ENCODE measurements at regions of chr22 and their contacts with region 1.

Region 1: GRCh38 chr22:29040385-29041275 is 21.0 kb downstream of the C22orf31 start:
- DNase-seq: peak; percentile 77
- ATAC-seq: peak; percentile 54
- H3K4me3 ChIP-seq: no peak overlapping the region
- H3K4me3 Mint-ChIP-seq: no peak overlapping the region
- H3K27ac ChIP-seq: no peak overlapping the region
- H3K27ac Mint-ChIP-seq: no peak overlapping the region
- H3K4me1 ChIP-seq: peaks cover 0 to 2% of the 10 kb centered on the region in 2 donors
- H3K4me1 Mint-ChIP-seq: no peaks in the 10 kb centered on the region
- H3K27me3 ChIP-seq: peaks cover 0 to 8% (median 3%) of the 10 kb centered on the region in 4 experiments
- H3K27me3 Mint-ChIP-seq: peaks cover 6% of the 10 kb centered on the region
- CTCF ChIP-seq: peak; percentile 96

Region 2: GRCh38 chr22:28019881-28020871 is 1020.5 kb before region 1 on chr22:
- CTCF ChIA-PET with region 1: interaction called, 15 read pairs
- POLR2A ChIA-PET with region 1: no interaction called
- intact Hi-C with region 1: no loop called
- DNase-seq: peak; percentile 67
- ATAC-seq: peak; percentile 80
- H3K4me3 ChIP-seq: no peak overlapping the region
- H3K4me3 Mint-ChIP-seq: no peak overlapping the region
- H3K27ac ChIP-seq: no peak overlapping the region
- H3K27ac Mint-ChIP-seq: no peak overlapping the region
- H3K4me1 ChIP-seq: no peaks in the 10 kb centered on the region
- H3K4me1 Mint-ChIP-seq: peaks cover 2% of the 10 kb centered on the region
- H3K27me3 ChIP-seq: no peaks in the 10 kb centered on the region
- H3K27me3 Mint-ChIP-seq: no peaks in the 10 kb centered on the region
- CTCF ChIP-seq: peak; percentile 91

Region 3: DNA sequence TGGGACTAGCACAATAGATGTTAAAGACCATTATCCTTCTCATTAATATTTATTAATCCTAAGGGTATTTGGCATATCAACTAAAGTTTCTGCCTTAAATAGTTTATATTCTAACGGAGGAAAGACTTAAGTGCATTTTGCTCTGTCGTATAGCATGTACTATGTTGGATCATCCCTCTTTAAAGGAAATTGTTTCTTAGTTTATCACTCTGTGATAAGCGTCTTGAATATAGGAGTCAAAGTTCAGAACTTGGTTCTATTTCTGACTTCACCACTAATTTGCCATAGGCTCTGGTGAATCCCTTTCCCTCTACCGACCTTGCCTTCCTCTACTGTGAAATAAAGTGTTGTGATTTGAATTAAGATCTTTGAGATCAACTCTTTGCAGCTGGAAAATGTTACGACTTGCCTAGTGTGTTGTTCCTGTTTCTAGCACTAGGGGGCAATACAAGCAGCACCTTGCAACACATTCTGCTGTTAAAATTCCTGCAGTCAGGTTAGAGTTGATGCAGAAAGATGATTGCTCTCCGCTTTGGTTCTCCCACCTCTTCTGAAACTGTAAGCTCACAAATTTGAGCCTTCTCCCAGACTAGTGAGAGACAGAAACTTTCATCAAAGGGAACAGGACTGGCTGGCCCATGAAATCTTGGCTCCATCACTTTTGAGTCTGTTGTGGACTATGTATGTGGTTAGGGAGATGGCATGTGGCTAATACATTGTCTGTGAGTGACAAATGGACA is 185.1 kb before region 1 on chr22:
- CTCF ChIA-PET with region 1: interaction called, 88 read pairs
- POLR2A ChIA-PET with region 1: no interaction called
- intact Hi-C with region 1: loop called (anchors 1 kb)
- DNase-seq: peak; percentile 72
- ATAC-seq: peak; percentile 61
- H3K4me3 ChIP-seq: no peak overlapping the region
- H3K4me3 Mint-ChIP-seq: no peak overlapping the region
- H3K27ac ChIP-seq: no peak overlapping the region
- H3K27ac Mint-ChIP-seq: no peak overlapping the region
- H3K4me1 ChIP-seq: no peaks in the 10 kb centered on the region
- H3K4me1 Mint-ChIP-seq: no peaks in the 10 kb centered on the region
- H3K27me3 ChIP-seq: peaks cover 0 to 5% (median 2%) of the 10 kb centered on the region in 4 experiments
- H3K27me3 Mint-ChIP-seq: peaks cover 12% of the 10 kb centered on the region
- CTCF ChIP-seq: peak; percentile 96

Region 4: DNA sequence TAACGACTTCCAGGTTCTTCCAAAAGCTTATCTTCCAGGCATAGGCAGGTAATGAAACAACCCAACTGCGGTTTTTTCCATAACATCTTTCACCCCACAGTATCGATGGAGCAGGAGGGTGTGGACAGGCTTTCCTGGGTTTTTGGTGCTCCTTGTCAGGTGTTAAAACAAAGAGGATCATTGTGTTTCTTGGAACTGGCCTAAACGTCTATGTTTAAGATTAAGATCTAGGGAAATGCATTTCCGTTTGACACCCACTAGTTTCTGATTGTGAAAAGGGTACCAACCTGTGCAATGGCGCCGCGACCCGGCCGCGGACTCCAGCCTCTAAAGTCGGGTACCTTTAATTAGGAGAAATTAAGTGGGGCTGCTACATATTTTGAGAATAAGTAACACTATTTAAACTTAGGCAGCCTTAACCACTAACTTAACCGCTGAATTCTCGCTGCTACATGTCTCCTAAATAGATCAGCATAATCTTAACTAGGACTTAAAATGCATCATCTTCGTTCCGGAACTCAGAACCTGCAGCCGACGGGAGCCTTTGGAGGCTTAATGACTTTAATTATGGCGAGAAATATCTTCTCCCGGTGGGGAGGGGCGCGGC is 10.5 kb before region 1 on chr22:
- CTCF ChIA-PET with region 1: interaction called, 19 read pairs
- POLR2A ChIA-PET with region 1: no interaction called
- intact Hi-C with region 1: no loop called
- DNase-seq: no peak
- ATAC-seq: no peak
- H3K4me3 ChIP-seq: peak overlapping the region in 3 of 5 experiments; percentile 13 to 52 (median 23)
- H3K4me3 Mint-ChIP-seq: peak overlapping the region; percentile 62
- H3K27ac ChIP-seq: no peak overlapping the region
- H3K27ac Mint-ChIP-seq: no peak overlapping the region
- H3K4me1 ChIP-seq: peaks cover 8 to 17% of the 10 kb centered on the region in 2 donors
- H3K4me1 Mint-ChIP-seq: peaks cover 8% of the 10 kb centered on the region
- H3K27me3 ChIP-seq: peaks cover 0 to 47% (median 24%) of the 10 kb centered on the region in 4 experiments
- H3K27me3 Mint-ChIP-seq: peaks cover 52% of the 10 kb centered on the region
- CTCF ChIP-seq: no peak

Region 5: GRCh38 chr22:29055192-29055830 is 14.7 kb after region 1 on chr22:
- CTCF ChIA-PET with region 1: interaction called, 10 read pairs
- POLR2A ChIA-PET with region 1: no interaction called
- intact Hi-C with region 1: no loop called
- DNase-seq: no peak
- ATAC-seq: no peak
- H3K4me3 ChIP-seq: no peak overlapping the region
- H3K4me3 Mint-ChIP-seq: no peak overlapping the region
- H3K27ac ChIP-seq: no peak overlapping the region
- H3K27ac Mint-ChIP-seq: no peak overlapping the region
- H3K4me1 ChIP-seq: no peaks in the 10 kb centered on the region
- H3K4me1 Mint-ChIP-seq: no peaks in the 10 kb centered on the region
- H3K27me3 ChIP-seq: peaks cover 0 to 9% (median 3%) of the 10 kb centered on the region in 4 experiments
- H3K27me3 Mint-ChIP-seq: peaks cover 27% of the 10 kb centered on the region
- CTCF ChIP-seq: no peak

Region 6: DNA sequence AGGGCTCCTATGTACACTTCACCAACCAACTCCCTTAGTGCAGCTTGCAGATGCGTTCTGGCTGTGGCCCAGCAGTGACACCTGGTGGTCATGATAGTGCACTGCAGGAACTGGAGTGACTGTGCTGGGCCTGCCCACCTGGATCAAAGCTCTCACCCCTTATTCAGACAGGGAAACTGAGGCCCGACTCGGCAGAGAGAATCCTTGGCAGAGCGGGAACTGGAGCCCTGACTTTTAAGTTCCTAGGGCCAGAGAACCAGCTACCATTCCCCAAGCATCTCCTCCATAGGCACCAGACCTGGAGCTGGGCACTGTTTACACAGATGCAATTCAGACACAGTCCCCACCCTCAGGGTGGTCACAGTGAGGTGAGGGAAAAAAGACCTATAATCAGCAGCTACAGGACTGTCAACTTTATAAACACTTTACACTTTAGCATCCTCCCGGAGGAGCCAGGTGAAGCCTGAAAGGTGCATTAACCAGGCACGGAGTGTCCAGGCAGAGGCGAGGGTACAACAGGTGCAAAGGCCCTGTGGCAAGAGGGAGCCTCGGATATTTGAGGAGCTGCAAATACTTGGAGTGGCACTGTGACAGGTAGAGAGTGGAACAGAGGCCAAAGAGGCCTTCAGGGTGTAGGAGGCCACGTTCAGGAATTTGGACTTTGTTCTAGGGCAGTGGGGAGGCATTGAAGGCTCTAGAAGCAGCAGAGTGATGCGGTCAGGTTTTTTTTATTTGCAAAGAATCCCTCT is 205.2 kb after region 1 on chr22:
- CTCF ChIA-PET with region 1: interaction called, 63 read pairs
- POLR2A ChIA-PET with region 1: no interaction called
- intact Hi-C with region 1: no loop called
- DNase-seq: peak; percentile 76
- ATAC-seq: peak; percentile 89
- H3K4me3 ChIP-seq: no peak overlapping the region
- H3K4me3 Mint-ChIP-seq: no peak overlapping the region
- H3K27ac ChIP-seq: no peak overlapping the region
- H3K27ac Mint-ChIP-seq: no peak overlapping the region
- H3K4me1 ChIP-seq: peaks cover 3 to 4% of the 10 kb centered on the region in 2 donors
- H3K4me1 Mint-ChIP-seq: no peaks in the 10 kb centered on the region
- H3K27me3 ChIP-seq: peaks cover 0 to 17% (median 3%) of the 10 kb centered on the region in 4 experiments
- H3K27me3 Mint-ChIP-seq: peaks cover 20% of the 10 kb centered on the region
- CTCF ChIP-seq: peak; percentile 99

Measured in B cell (primary cell).